ENCODE measurements at regions of chr3 and their contacts with region 1.

Region 1: GRCh38 chr3:38164966-38165680 is at the start of gene OXSR1:
- DNase-seq: peak; percentile 94 to 100 (median 98)

Region 2: DNA sequence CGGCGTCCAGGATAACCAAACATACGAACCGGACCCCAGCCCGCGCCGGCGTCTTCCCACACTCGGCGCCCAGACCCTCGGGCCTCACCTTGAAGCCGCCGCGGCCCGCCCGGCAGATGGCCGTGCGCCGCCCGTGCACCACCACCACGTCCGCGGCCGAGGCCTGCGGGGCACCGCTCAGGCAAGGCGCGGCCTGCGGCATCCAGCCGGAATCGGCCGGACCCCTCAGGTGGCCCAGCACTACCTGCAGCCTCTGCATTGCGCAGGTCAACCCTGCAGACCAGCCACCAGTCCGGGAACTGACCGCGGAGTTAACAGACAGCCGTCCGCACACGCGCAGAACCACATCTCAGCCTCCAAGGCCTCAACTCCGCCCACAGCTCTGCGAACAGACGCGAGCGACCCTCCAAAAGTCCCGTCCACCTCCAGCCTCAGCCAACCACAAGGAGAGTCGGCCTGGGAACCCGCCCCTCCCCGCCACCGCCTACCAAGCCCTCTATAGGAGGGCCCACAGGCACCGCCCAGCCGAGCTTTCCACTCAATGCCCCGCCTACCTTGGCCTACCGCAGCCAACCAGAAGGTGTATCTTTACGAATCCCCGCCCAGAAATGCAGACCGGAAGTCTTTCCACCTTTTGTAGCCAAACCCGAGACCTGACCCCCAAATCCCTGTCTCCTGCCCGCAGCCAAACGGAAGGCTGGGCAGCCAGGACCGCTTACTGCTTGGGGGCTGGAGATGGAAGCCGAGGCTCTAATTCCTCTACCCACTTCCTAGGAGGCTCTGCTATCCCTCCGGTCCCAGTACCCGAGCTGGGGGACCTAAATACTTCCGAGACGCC is 28.1 kb before region 1 on chr3 and contains the start of gene ACAA1:
- intact Hi-C with region 1: loop called (anchors 2 kb)
- DNase-seq: peak; percentile 94 to 100 (median 99)

Region 3: DNA sequence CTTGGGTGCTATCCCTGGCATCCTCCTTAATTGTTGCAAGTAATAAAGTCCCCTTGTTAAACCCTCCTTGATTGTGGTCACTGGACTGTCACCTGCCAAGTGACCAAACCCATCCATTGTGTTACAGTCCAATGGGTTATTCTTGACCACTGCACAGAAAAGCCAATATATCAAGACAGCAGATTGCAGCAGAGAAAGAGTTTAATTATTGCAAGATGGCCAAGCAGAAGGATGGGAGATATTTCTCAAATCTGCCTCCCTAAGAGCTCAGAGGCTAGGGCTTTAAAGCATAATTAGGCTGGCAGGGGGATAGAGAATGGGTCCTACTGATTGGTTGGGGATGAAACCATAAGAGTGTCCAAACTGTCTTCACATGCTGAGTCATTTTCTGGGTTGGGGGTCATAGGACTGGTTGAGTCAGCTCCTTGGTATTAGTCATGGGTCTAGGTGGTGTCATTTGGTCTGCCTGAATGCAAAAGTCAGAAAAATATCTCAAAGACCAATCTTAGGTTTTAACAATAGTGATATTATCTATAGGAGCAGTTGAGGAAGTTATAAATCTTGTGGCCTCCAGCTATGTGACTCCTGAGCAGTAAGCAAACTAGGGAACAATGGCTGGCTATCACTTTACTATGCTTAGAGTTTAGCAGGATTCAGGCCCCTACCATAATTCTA is 162.3 kb after region 1 on chr3:
- intact Hi-C with region 1: no loop called
- DNase-seq: peak in 2 of 42 donors; percentile 5 to 9

Measured in head of caudate nucleus (tissue), 42 donors.